CD8-positive, alpha-beta T cell (primary cell): ENCODE measurements at regions of chr5 and their contacts with region 1.

Region 1: DNA sequence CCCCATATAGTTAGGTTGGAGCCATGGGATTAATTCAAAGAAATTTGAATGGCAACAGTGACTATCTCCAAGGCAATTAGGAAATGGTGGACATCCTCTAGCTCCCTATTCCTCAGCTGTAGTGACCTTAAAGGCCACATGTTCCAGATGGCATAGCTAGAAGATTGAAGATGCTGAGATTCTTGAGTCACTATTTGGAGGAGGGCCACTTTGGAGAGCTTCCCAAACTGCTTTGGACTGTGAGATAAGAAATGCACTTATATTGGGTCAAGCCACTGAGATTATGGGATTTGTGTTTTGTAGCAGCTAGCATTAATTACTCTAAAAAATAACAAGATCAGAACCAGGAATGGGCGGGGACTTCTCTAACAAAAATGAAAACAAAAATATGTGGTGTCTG is 636.2 kb upstream of the CCNG1 start:
- DNase-seq: no peak
- ATAC-seq: no peak
- H3K4me3 ChIP-seq: no peak overlapping the region
- H3K4me3 Mint-ChIP-seq: no peak overlapping the region
- H3K27ac ChIP-seq: no peak overlapping the region
- H3K27ac Mint-ChIP-seq: no peak overlapping the region
- H3K4me1 ChIP-seq: no peaks in the 10 kb centered on the region
- H3K4me1 Mint-ChIP-seq: no peaks in the 10 kb centered on the region
- H3K27me3 ChIP-seq: no peaks in the 10 kb centered on the region
- H3K27me3 Mint-ChIP-seq: no peaks in the 10 kb centered on the region
- CTCF ChIP-seq: no peak

Region 2: GRCh38 chr5:162091336-162091735 is 709.9 kb before region 1 on chr5:
- CTCF ChIA-PET with region 1: no interaction called
- POLR2A ChIA-PET with region 1: no interaction called
- intact Hi-C with region 1: no loop called
- DNase-seq: no peak
- ATAC-seq: no peak
- H3K4me3 ChIP-seq: no peak overlapping the region
- H3K4me3 Mint-ChIP-seq: no peak overlapping the region
- H3K27ac ChIP-seq: no peak overlapping the region
- H3K27ac Mint-ChIP-seq: no peak overlapping the region
- H3K4me1 ChIP-seq: no peaks in the 10 kb centered on the region
- H3K4me1 Mint-ChIP-seq: no peaks in the 10 kb centered on the region
- H3K27me3 ChIP-seq: no peaks in the 10 kb centered on the region
- H3K27me3 Mint-ChIP-seq: no peaks in the 10 kb centered on the region
- CTCF ChIP-seq: no peak

Region 3: DNA sequence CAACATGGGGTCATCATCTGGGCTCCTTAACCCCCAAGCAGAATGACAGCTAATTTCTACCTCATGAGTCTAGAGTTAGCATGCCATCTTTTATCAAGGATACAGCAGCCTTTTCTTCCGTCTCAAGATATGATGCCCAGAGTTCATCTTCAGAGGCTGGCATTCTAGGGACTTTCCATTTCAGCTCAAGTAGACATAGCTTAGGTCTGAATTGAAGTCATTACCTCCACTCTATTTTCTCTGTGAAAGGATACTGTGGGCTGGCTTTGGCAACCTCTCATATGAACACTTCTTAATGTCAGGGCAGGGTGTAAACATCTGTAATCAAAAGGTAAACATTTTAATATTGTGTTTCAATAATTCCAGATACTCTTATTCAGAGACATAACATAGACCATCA is 1239.9 kb after region 1 on chr5:
- CTCF ChIA-PET with region 1: no interaction called
- POLR2A ChIA-PET with region 1: no interaction called
- intact Hi-C with region 1: no loop called
- DNase-seq: no peak
- ATAC-seq: no peak
- H3K4me3 ChIP-seq: no peak overlapping the region
- H3K4me3 Mint-ChIP-seq: no peak overlapping the region
- H3K27ac ChIP-seq: no peak overlapping the region
- H3K27ac Mint-ChIP-seq: no peak overlapping the region
- H3K4me1 ChIP-seq: no peaks in the 10 kb centered on the region
- H3K4me1 Mint-ChIP-seq: no peaks in the 10 kb centered on the region
- H3K27me3 ChIP-seq: no peaks in the 10 kb centered on the region
- H3K27me3 Mint-ChIP-seq: no peaks in the 10 kb centered on the region
- CTCF ChIP-seq: no peak

Region 4: GRCh38 chr5:164649266-164649665 is 1848.0 kb after region 1 on chr5:
- CTCF ChIA-PET with region 1: no interaction called
- POLR2A ChIA-PET with region 1: no interaction called
- intact Hi-C with region 1: loop called in 1 of 2 experiments (anchors 10 kb)
- DNase-seq: no peak
- ATAC-seq: no peak
- H3K4me3 ChIP-seq: no peak overlapping the region
- H3K4me3 Mint-ChIP-seq: no peak overlapping the region
- H3K27ac ChIP-seq: no peak overlapping the region
- H3K27ac Mint-ChIP-seq: no peak overlapping the region
- H3K4me1 ChIP-seq: no peaks in the 10 kb centered on the region
- H3K4me1 Mint-ChIP-seq: no peaks in the 10 kb centered on the region
- H3K27me3 ChIP-seq: no peaks in the 10 kb centered on the region
- H3K27me3 Mint-ChIP-seq: no peaks in the 10 kb centered on the region
- CTCF ChIP-seq: no peak